Lower leg skin (tissue), 4 donors: ENCODE measurements at regions of chr17 and their contacts with region 1.

Region 1: GRCh38 chr17:37884516-37884915 is 39.7 kb upstream of the TBC1D3K start:
- DNase-seq: no peak
- H3K4me3 ChIP-seq: no peak overlapping the region
- CTCF ChIP-seq: no peak
- POLR2A ChIP-seq: no peak

Region 2: GRCh38 chr17:36133602-36134236 is 1750.8 kb before region 1 on chr17:
- intact Hi-C with region 1: loop called (anchors 10 kb)
- DNase-seq: peak in 1 of 2 donors; percentile 9
- H3K4me3 ChIP-seq: no peak overlapping the region
- CTCF ChIP-seq: no peak
- POLR2A ChIP-seq: no peak

Region 3: DNA sequence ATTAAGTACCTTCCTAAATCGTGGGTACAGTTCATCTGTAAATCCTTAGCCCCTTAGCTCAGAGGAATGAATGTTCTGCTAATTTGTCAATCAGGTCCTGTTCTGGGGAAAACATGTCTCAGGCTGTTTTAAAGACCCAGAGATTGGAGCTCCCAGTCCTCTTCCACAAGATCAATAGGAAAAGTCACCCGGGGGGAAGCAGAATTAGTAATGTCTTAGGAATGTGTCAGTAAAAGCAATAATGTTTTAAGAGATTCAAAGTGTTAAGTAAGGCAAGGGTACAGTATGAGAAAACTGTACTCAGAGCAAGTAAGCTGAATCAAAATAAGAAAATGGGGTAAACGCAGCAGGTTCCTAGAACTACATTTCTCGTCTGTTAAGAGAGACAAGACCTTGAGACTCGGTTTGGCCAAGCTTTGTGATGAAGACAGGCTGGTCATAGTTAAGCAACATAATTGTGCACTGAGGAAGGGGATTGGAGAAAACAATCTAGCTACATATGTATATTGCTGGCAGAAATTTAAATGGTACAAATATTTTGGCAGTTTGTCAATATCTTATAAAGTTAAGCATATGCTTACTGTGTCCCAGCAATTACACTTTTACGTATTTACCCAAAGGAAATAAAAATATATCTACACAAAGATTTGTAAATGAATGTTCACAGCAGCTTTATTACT is 701.6 kb before region 1 on chr17:
- intact Hi-C with region 1: no loop called
- DNase-seq: no peak
- H3K4me3 ChIP-seq: no peak overlapping the region
- CTCF ChIP-seq: no peak
- POLR2A ChIP-seq: no peak